ENCODE measurements at regions of chr11 and their contacts with region 1.

Region 1: DNA sequence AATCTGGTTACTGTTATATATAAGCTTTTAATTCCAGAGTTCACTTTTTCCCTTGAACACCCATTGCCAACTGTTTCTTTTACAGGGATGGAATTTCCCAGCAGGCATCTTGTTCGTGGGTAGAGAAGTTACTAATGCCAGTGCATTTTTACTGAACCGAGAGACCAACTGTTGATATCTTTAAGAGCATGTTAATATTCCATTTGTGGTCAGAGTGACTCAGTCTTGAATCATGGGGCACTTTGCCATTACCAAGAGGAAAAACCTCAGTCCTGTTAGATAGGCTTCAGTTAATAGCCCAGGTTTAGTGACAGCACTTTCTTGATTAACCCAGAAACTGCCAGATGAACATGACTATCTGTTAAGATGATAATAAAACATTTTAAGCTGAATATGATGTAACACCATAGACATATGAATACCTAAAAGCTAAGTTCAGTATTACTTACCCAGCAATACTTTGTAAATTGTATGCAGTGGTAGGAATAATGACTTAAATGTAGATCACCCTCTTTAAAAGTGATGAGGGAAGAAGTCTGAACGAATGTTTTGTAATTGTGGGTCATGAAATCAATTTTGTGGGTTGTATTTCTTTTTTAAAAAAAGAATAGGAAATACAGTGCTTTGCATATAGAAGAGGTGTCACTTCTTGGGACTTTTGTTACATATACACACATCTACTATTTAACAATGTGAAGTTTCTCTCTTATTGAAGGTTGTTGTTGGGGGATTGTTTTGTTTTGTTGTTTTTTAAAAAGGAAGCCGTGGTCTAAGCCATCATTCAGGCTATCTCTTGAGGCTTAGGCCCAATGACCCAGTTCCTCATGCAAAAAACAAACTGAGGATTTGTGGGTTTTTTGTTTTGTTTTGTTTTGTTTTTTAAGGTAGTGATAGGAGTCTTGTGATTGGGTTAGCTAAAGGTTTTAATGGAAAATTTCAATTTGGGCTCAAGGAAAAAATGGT is 79.2 kb upstream of the GRIK4 start:
- DNase-seq: peak in 1 of 2 donors; percentile 64
- ATAC-seq: peak; percentile 88 to 97 (median 94)
- H3K4me3 ChIP-seq: no peak overlapping the region
- H3K27ac ChIP-seq: peak overlapping the region in 8 of 10 donors; percentile 34 to 84 (median 74)
- H3K4me1 ChIP-seq: peaks cover 0 to 30% (median 22%) of the 10 kb centered on the region in 9 donors
- H3K27me3 ChIP-seq: no peaks in the 10 kb centered on the region
- CTCF ChIP-seq: no peak

Region 2: GRCh38 chr11:120400564-120401364 is 31.6 kb before region 1 on chr11:
- intact Hi-C with region 1: loop called in 1 of 10 experiments (anchors 1 kb)
- DNase-seq: peak in 1 of 2 donors; percentile 25
- ATAC-seq: peak in 7 of 8 donors; percentile 51 to 93 (median 80)
- H3K4me3 ChIP-seq: peak overlapping the region in 1 of 10 donors; percentile 4
- H3K27ac ChIP-seq: peak overlapping the region in 7 of 10 donors; percentile 7 to 57 (median 30)
- H3K4me1 ChIP-seq: peaks cover 11 to 87% (median 63%) of the 10 kb centered on the region in 9 donors
- H3K27me3 ChIP-seq: peaks cover 0 to 6% (median 0%) of the 10 kb centered on the region in 7 donors
- CTCF ChIP-seq: no peak

Region 3: GRCh38 chr11:120482149-120482548 is 49.8 kb after region 1 on chr11:
- intact Hi-C with region 1: loop called in 1 of 10 experiments (anchors 10 kb)
- DNase-seq: no peak
- ATAC-seq: peak in 1 of 8 donors; percentile 19
- H3K4me3 ChIP-seq: no peak overlapping the region
- H3K27ac ChIP-seq: no peak overlapping the region
- H3K4me1 ChIP-seq: no peaks in the 10 kb centered on the region
- H3K27me3 ChIP-seq: no peaks in the 10 kb centered on the region
- CTCF ChIP-seq: no peak

Region 4: DNA sequence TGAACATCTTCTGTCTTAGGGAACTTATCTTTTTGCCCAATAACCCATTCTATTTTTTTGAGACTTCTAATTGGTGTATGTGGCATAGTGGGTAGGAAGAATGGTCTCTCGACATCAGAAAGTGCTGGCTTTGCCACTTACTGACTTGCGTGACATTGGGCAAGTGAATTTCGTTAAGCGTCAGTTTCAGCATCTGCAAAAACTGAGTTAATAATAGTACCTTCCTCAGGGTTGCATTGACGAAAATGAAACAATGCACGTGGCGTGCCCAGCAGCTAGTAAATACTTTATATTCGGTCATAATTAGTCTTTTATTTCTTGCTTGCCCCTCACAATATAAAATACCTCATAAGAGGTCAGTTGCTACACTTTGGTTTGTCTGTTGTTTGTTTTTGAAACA is 66.8 kb after region 1 on chr11:
- intact Hi-C with region 1: no loop called
- DNase-seq: no peak
- ATAC-seq: no peak
- H3K4me3 ChIP-seq: no peak overlapping the region
- H3K27ac ChIP-seq: no peak overlapping the region
- H3K4me1 ChIP-seq: peaks cover 0 to 20% (median 5%) of the 10 kb centered on the region in 9 donors
- H3K27me3 ChIP-seq: peaks cover 0 to 28% (median 5%) of the 10 kb centered on the region in 7 donors
- CTCF ChIP-seq: no peak